Ascending aorta (tissue), 2 donors: ENCODE measurements at regions of chr20 and their contacts with region 1.

Region 1: GRCh38 chr20:36847009-36847709 is 28.8 kb upstream of the TLDC2 start:
- DNase-seq: peak; percentile 44 to 92
- H3K4me3 ChIP-seq: no peak overlapping the region
- H3K27ac ChIP-seq: peak overlapping the region; percentile 93 to 98
- H3K4me1 ChIP-seq: peaks cover 29 to 54% of the 10 kb centered on the region in 2 donors
- H3K27me3 ChIP-seq: no peaks in the 10 kb centered on the region
- CTCF ChIP-seq: no peak

Region 2: DNA sequence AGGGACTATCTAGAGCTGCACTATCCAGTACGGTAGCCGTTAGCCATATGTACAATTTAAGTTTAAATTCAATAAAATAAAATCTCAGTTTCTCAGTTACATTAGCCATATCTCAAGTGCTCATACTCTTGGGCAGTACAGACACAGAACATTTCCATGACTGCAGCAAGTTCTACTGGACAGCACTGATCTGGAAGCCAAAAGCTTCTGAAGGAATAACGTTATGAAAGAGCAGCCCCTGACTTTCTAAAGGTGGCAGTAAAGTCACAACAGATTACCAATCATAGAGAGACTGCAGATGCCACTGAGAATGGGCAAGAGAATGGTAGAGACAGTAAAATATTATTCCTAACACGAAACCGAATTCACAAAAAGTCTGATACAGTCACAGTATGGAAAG is 138.0 kb before region 1 on chr20:
- intact Hi-C with region 1: loop called (anchors 5 kb)
- DNase-seq: no peak
- H3K4me3 ChIP-seq: no peak overlapping the region
- H3K27ac ChIP-seq: peak overlapping the region; percentile 19 to 20
- H3K4me1 ChIP-seq: peaks cover 4 to 28% of the 10 kb centered on the region in 2 donors
- H3K27me3 ChIP-seq: no peaks in the 10 kb centered on the region
- CTCF ChIP-seq: peak in 1 of 3 experiments; percentile 13

Region 3: DNA sequence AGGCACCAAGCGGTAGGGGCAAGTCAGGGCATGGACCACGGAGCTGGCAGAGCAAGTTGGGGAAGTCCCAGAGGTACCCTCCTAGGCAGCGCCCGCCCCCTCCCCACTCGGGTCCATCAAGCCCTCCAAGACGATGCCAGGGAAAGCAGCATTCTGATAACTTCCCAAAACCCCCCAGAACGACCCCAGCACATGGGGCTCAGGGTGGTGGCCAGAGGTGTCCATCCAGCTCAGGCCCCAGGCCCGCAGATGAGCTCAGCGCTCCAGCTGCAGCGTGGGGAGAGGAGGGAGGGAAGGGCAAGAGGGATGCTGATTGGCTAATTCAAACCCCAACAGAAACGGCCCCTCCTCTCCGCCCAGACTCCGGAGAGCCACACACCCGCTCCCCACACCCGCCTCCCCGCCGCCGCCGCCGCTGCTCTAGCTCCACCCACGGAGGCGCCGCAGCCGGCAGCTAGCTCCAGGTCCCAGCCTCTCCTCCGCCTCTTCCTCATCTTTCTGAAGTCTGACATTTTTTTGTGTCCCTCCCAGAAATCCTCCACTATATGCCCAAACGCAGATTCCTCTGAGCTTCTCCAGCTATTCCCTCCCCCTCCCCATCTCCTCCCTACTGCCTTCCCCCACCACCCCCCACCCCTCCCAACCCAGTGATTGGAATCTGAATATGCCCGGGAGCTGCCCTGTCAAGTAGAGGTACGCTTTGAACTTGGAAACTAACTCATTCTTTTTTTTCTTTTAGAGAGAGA is 11.5 kb before region 1 on chr20:
- intact Hi-C with region 1: loop called (anchors 1 kb)
- DNase-seq: peak; percentile 77 to 96
- H3K4me3 ChIP-seq: peak overlapping the region; percentile 18 to 56
- H3K27ac ChIP-seq: peak overlapping the region; percentile 81 to 92
- H3K4me1 ChIP-seq: peaks cover 22 to 50% of the 10 kb centered on the region in 2 donors
- H3K27me3 ChIP-seq: no peaks in the 10 kb centered on the region
- CTCF ChIP-seq: no peak

Region 4: GRCh38 chr20:37449276-37449675 is 602.1 kb after region 1 on chr20:
- intact Hi-C with region 1: no loop called
- DNase-seq: no peak
- H3K4me3 ChIP-seq: no peak overlapping the region
- H3K27ac ChIP-seq: no peak overlapping the region
- H3K4me1 ChIP-seq: no peaks in the 10 kb centered on the region
- H3K27me3 ChIP-seq: no peaks in the 10 kb centered on the region
- CTCF ChIP-seq: no peak